Dendritic cell treated with granulocyte-macrophage colony-stimulating factor and Interleukin-4, amounts not matched to agents 40 ng/mL and 50 ng/mL, for 4 days (primary cell): ENCODE measurements at regions of chr12 and their contacts with region 1.

Region 1: DNA sequence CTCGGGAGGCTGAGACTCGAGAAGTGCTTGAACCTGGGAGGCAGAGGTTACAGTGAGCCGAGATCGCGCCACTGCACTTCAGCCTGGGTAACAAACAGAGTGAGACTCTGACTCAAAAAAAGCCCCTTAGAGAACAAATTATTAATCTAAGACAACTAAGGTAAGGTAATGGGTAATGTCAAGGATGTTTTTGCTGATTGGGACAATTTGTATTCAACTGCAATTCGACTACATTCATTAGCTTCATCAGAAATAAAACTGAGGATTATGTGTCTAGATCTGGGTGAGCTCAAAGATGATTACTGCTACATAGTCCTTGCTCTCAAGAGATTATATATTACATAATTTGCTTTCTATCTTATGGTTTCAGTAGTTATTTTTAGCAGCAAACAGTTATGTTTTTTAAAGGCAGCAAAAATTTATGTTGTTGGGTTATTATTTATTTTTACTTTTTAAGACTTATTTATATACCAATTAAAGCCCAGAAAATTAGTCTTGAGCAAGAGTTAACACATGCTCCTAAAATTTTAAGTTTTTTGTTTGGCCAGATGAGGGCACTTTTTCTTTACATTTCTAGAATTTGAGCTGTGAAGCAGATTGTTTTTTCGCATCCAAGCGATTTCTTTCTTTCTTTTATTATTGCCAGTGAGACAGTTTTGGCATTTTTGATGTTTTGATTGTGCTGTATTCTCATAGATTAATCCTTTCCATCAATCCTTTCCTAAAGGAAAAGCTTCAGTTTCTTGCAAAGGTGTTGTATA is 52.3 kb downstream of the PLEKHA5 start:
- H3K4me3 Mint-ChIP-seq: no peak overlapping the region
- H3K27ac Mint-ChIP-seq: no peak overlapping the region
- H3K4me1 Mint-ChIP-seq: peaks cover 13% of the 10 kb centered on the region
- H3K27me3 Mint-ChIP-seq: peaks cover 1% of the 10 kb centered on the region

Region 2: GRCh38 chr12:19223018-19223417 is 41.2 kb after region 1 on chr12:
- intact Hi-C with region 1: loop called (anchors 5 kb)
- H3K4me3 Mint-ChIP-seq: no peak overlapping the region
- H3K27ac Mint-ChIP-seq: peak overlapping the region; percentile 58
- H3K4me1 Mint-ChIP-seq: peaks cover 18% of the 10 kb centered on the region
- H3K27me3 Mint-ChIP-seq: no peaks in the 10 kb centered on the region